Activated CD4-positive, alpha-beta T cell treated with anti-CD3 and anti-CD28 coated beads for 36 hours (primary cell): ENCODE measurements at regions of chr19 and their contacts with region 1.

Region 1: GRCh38 chr19:38559428-38560401 is 58.0 kb downstream of the MAP4K1 start:
- DNase-seq: peak; percentile 55
- ATAC-seq: peak; percentile 89
- H3K4me3 Mint-ChIP-seq: no peak overlapping the region
- H3K27ac Mint-ChIP-seq: peak overlapping the region; percentile 53
- H3K4me1 Mint-ChIP-seq: peaks cover 33% of the 10 kb centered on the region
- H3K27me3 Mint-ChIP-seq: peaks cover 1% of the 10 kb centered on the region

Region 2: GRCh38 chr19:38577826-38578225 is 18.1 kb after region 1 on chr19:
- CTCF ChIA-PET with region 1: no interaction called
- POLR2A ChIA-PET with region 1: no interaction called
- intact Hi-C with region 1: loop called in 1 of 2 experiments (anchors 2 kb)
- DNase-seq: no peak
- ATAC-seq: no peak
- H3K4me3 Mint-ChIP-seq: no peak overlapping the region
- H3K27ac Mint-ChIP-seq: no peak overlapping the region
- H3K4me1 Mint-ChIP-seq: peaks cover 5% of the 10 kb centered on the region
- H3K27me3 Mint-ChIP-seq: no peaks in the 10 kb centered on the region

Region 3: DNA sequence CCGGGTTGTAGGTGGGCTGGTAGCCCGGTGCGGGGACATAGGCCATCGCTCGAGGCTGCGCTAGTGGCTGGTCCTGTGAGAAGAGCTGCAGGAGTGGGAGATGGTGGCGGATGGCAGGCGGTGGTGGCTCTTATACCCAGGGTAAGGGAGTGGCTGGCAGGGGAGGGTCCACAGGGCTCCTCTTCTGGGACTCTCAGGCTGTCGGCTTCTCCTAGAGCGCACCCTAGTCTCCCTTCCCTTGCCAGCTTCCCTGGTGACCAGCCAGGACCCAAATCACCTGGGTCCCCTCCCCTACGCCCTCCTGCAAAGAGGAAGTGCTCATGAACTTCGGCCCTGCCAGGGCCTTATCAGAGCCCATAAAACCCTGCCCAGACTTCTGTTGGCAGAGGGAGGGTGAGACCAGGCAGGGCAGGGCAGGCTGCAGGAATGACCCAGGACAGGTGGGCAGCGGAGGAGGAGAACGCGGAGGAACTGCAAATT is 253.2 kb after region 1 on chr19 and contains the start of gene LGALS4:
- CTCF ChIA-PET with region 1: no interaction called
- POLR2A ChIA-PET with region 1: no interaction called
- intact Hi-C with region 1: no loop called
- DNase-seq: no peak
- ATAC-seq: no peak
- H3K4me3 Mint-ChIP-seq: no peak within 1 kb of the TSS
- H3K27ac Mint-ChIP-seq: no peak within 1 kb of the TSS
- H3K4me1 Mint-ChIP-seq: no peaks in the 10 kb centered on the region
- H3K27me3 Mint-ChIP-seq: no peaks in the 10 kb centered on the region
- total RNA-seq, gene LGALS4: 0.59 to 1.1 TPM